ENCODE measurements at regions of chr2 and their contacts with region 1.

Region 1: DNA sequence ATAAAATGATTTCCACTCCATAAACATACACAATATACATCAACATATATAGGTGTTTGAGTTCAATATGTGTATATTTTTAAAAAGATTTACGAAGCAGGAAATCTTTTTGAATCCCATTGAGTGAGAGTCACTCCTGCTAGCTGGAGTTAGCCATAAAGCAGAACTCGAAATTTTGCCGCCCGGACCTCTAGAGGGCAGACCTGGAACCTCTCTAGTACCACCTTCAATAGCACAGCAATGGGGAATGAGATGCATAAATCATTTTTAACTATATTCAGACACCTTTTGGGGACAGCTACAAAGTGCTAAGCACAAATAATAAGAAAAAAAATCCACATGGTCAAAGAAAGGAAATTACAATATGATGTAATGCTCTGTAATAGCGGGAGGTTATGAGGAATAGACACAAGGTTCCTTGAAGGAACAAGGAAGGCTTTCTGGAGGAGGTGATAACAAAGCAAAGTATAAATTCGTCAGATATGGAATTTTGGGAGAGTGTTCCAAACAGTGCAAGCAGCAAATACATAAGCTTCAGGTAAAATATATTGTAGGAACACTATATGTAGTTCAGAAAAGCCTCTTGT is 533.4 kb downstream of the ERBB4 start:
- DNase-seq: no peak
- H3K4me3 ChIP-seq: no peak overlapping the region
- H3K27ac ChIP-seq: no peak overlapping the region
- H3K4me1 ChIP-seq: no peaks in the 10 kb centered on the region
- H3K27me3 ChIP-seq: no peaks in the 10 kb centered on the region
- CTCF ChIP-seq: peak in 1 of 5 experiments; percentile 15
- EP300 ChIP-seq: no peak
- POLR2A ChIP-seq: no peak

Region 2: DNA sequence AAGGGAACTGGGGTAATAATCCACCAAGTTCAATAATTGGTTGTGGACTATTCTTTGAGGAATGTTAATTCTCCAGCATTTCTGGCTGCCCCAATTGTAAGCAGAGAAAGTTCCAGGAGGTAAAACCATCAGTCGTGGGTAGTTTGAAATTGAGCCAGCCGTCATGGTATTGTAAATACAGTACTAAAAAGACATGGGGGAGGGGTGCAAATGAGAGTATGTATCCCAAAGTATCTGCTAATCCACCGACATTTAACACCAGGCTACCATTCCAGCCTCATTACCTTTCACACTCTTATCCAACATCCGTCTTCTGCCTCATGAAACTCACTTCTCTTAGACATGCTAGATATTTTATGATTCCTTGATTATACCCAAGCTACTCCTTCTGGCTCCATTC is 25.5 kb after region 1 on chr2:
- in situ Hi-C with region 1: no loop called
- intact Hi-C with region 1: loop called (anchors 1 kb)
- DNase-seq: no peak
- H3K4me3 ChIP-seq: no peak overlapping the region
- H3K27ac ChIP-seq: no peak overlapping the region
- H3K4me1 ChIP-seq: no peaks in the 10 kb centered on the region
- H3K27me3 ChIP-seq: no peaks in the 10 kb centered on the region
- CTCF ChIP-seq: no peak
- EP300 ChIP-seq: no peak
- POLR2A ChIP-seq: no peak

Measured in transverse colon (tissue), 4 donors.